ENCODE measurements at regions of chr7 and their contacts with region 1.

Region 1: GRCh38 chr7:98434095-98434494 is 33.2 kb upstream of the BAIAP2L1 start:
- DNase-seq: no peak
- H3K4me3 ChIP-seq: no peak overlapping the region
- H3K27ac ChIP-seq: no peak overlapping the region
- H3K4me1 ChIP-seq: no peaks in the 10 kb centered on the region
- H3K27me3 ChIP-seq: peaks cover 0 to 7% (median 0%) of the 10 kb centered on the region in 7 donors
- CTCF ChIP-seq: no peak
- POLR2A ChIP-seq: no peak

Region 2: DNA sequence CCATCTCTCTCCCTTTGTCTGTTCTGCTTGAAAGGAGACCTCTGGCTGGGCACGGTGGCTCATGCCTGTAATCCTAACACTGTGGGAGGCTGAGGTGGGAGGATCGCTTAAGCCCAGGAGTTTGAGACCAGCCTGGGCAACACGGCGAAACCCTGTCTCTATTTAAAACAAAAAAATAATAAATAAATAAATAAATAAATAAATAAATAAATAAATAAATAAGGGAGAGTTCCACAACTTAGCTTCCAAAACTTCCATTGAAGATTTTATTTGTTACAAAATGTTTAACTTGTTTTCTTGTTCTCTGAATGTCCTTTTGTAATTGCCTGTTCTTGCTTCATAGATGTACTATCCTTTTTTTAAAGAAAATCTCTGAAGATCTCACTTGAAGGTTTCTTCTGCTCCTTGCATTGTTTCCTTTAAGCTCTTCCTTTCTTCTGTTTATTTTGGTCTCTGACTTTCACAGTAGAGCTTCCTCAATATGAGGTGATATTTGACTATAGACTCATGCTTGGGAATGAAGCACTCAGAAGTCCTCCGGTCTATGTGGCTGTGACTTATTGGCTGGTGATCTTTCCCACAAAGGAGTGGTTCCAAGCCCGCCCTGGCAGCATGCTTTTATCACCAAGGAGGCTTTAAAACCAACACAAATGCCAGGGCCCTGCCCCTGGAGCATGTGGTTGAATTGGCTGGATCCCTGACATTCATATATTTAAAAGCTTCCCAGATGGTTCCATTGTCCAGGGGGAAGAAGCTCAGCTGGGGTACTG is 164.9 kb after region 1 on chr7:
- intact Hi-C with region 1: no loop called
- DNase-seq: no peak
- H3K4me3 ChIP-seq: no peak overlapping the region
- H3K27ac ChIP-seq: no peak overlapping the region
- H3K4me1 ChIP-seq: no peaks in the 10 kb centered on the region
- H3K27me3 ChIP-seq: peaks cover 0 to 5% (median 0%) of the 10 kb centered on the region in 7 donors
- CTCF ChIP-seq: no peak
- POLR2A ChIP-seq: no peak

Region 3: DNA sequence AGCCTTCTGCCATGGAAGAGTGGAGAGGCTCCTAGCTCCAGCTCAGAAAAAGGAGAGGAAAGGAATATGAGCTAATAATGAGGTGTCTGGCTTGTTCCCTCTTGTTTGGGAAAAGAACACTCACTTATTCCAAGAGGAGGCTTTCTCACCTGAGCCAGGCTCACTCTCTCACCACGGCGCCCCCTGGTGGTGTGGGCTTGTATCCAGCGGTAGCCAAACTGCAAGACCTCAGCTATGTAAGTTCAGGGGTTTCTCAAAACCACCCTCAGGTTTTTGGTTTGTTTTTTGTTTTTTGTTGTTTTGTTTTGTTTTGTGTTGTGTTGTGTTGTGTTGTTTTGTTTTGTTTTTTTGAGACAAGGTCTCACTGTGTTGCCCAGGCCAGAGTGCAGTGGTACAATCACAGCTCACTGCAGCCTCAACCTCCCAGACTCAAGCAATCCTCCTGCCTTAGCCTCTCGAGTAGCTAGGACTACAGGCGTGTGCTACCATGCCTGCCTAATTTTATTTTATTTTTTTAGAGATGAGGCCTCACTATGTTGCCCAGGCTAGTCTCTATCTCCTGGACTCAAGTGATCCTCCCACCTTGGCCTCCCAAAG is 311.7 kb after region 1 on chr7:
- intact Hi-C with region 1: loop called (anchors 5 kb)
- DNase-seq: peak; percentile 91
- H3K4me3 ChIP-seq: no peak overlapping the region
- H3K27ac ChIP-seq: no peak overlapping the region
- H3K4me1 ChIP-seq: no peaks in the 10 kb centered on the region
- H3K27me3 ChIP-seq: peaks cover 0 to 35% (median 0%) of the 10 kb centered on the region in 7 donors
- CTCF ChIP-seq: peak; percentile 31 to 80 (median 69)
- POLR2A ChIP-seq: no peak

Region 4: GRCh38 chr7:98841179-98841997 is 407.3 kb after region 1 on chr7:
- intact Hi-C with region 1: loop called (anchors 1 kb)
- DNase-seq: peak; percentile 90
- H3K4me3 ChIP-seq: no peak overlapping the region
- H3K27ac ChIP-seq: no peak overlapping the region
- H3K4me1 ChIP-seq: peaks cover 0 to 4% (median 0%) of the 10 kb centered on the region in 6 donors
- H3K27me3 ChIP-seq: peaks cover 0 to 49% (median 0%) of the 10 kb centered on the region in 7 donors
- CTCF ChIP-seq: peak; percentile 70 to 97 (median 92)
- POLR2A ChIP-seq: no peak